ENCODE measurements at regions of chr12 and their contacts with region 1.

Region 1: DNA sequence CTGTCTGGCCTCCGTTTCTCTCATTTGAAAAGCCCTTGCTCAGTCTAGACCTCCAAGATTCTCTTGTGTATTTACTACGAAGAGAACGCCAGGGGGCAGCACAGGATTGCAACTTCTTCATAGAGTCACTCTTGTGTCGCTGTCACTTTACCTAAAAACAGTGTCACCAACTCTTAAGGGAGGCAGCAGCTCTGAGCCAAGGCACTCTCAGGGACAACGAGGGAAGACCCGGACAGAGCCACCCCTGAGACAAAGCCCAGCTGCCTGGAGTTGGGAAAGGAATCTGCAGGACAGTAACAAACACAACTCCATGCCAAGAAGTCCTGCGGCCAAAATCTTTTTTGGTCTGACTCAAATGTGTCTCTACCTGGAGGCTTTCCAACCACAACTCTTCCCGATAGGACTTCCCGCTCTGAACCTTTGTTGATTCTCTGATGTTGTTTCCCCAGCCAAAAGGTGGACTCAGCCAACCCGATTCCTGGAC is 9.6 kb upstream of the RPAP3 start:
- DNase-seq: peak; percentile 74 to 88 (median 82)
- ATAC-seq: peak; percentile 45 to 51 (median 48)
- H3K4me3 ChIP-seq: no peak overlapping the region
- H3K27ac ChIP-seq: peak overlapping the region in 11 of 12 donors; percentile 3 to 95 (median 88)
- H3K4me1 ChIP-seq: peaks cover 7 to 52% (median 44%) of the 10 kb centered on the region in 12 donors
- H3K27me3 ChIP-seq: no peaks in the 10 kb centered on the region
- CTCF ChIP-seq: peak; percentile 73 to 89 (median 80)
- POLR2A ChIP-seq: no peak

Region 2: GRCh38 chr12:47591361-47591791 is 124.1 kb before region 1 on chr12:
- intact Hi-C with region 1: no loop called
- DNase-seq: no peak
- ATAC-seq: peak in 1 of 4 donors; percentile 53
- H3K4me3 ChIP-seq: no peak overlapping the region
- H3K27ac ChIP-seq: peak overlapping the region in 3 of 12 donors; percentile 22 to 35 (median 24)
- H3K4me1 ChIP-seq: peaks cover 0 to 22% (median 7%) of the 10 kb centered on the region in 12 donors
- H3K27me3 ChIP-seq: no peaks in the 10 kb centered on the region
- CTCF ChIP-seq: no peak
- POLR2A ChIP-seq: no peak

Region 3: GRCh38 chr12:47741340-47741703 is 25.9 kb after region 1 on chr12:
- intact Hi-C with region 1: loop called in 4 of 10 experiments (anchors 1 to 2 kb)
- DNase-seq: peak; percentile 78 to 92 (median 85)
- ATAC-seq: peak in 1 of 4 donors; percentile 4
- H3K4me3 ChIP-seq: no peak overlapping the region
- H3K27ac ChIP-seq: peak overlapping the region in 11 of 12 donors; percentile 44 to 86 (median 72)
- H3K4me1 ChIP-seq: peaks cover 23 to 79% (median 50%) of the 10 kb centered on the region in 12 donors
- H3K27me3 ChIP-seq: no peaks in the 10 kb centered on the region
- CTCF ChIP-seq: no peak
- POLR2A ChIP-seq: no peak

Region 4: GRCh38 chr12:47767216-47767724 is 51.8 kb after region 1 on chr12:
- intact Hi-C with region 1: loop called in 9 of 10 experiments (anchors 1 to 5 kb)
- DNase-seq: peak in 4 of 5 donors; percentile 61 to 76 (median 66)
- ATAC-seq: peak in 3 of 4 donors; percentile 36 to 62 (median 37)
- H3K4me3 ChIP-seq: no peak overlapping the region
- H3K27ac ChIP-seq: no peak overlapping the region
- H3K4me1 ChIP-seq: peaks cover 0 to 49% (median 16%) of the 10 kb centered on the region in 12 donors
- H3K27me3 ChIP-seq: no peaks in the 10 kb centered on the region
- CTCF ChIP-seq: peak; percentile 48 to 75 (median 68)
- POLR2A ChIP-seq: no peak

Region 5: DNA sequence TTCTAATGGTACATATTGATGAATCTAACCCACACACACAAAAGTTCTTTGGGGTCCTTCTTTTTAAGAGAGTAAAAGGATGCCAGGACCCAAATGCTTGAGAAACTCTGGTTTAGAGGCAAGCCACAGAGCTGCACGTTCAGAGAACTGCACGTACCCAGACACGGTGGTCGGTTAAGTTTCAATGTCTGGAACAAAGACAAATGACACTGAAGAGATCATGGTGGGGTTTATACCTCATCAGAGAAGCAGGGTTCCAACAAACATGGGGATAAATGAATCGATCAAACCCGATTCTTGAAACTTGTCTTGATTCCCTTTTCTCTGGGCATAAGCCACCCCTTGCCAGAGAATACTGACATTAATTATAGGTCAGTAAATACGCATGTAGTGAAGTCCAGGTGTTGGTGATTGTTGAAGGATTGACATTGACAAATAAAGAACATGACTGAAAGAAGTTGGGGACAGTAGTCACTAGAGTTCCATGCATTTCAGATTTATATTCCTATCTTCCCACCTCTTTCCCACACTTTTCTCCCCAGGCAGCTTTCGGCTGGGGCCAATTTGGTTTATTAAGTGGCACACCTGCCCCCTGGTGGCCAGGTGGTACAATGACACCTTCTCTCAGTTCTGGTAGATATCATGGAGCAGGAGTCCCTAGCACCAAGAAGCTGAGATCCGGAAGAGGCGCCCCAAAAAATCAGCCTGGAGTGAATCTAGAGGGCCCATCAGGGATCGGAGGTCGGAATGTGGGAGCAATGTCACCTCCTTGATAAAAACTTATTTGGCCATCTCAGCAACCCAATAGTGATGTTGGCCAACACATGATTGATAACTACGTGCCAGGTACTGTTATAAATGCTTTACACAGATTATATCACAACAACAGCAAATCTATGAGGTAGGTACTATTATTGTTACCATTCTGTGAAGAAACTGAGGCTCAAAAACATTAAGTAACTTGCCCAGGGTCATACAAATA is 122.0 kb after region 1 on chr12:
- intact Hi-C with region 1: loop called (anchors 1 to 2 kb)
- DNase-seq: peak; percentile 69 to 81 (median 72)
- ATAC-seq: peak; percentile 52 to 78 (median 70)
- H3K4me3 ChIP-seq: no peak overlapping the region
- H3K27ac ChIP-seq: peak overlapping the region in 1 of 12 donors; percentile 36
- H3K4me1 ChIP-seq: peaks cover 0 to 33% (median 11%) of the 10 kb centered on the region in 12 donors
- H3K27me3 ChIP-seq: no peaks in the 10 kb centered on the region
- CTCF ChIP-seq: peak; percentile 89 to 99 (median 92)
- POLR2A ChIP-seq: no peak

Region 6: GRCh38 chr12:47949441-47950308 is 234.2 kb after region 1 on chr12:
- intact Hi-C with region 1: loop called in 3 of 10 experiments (anchors 10 kb)
- DNase-seq: peak; percentile 68 to 88 (median 80)
- ATAC-seq: peak; percentile 70 to 92 (median 89)
- H3K4me3 ChIP-seq: no peak overlapping the region
- H3K27ac ChIP-seq: no peak overlapping the region
- H3K4me1 ChIP-seq: peaks cover 0 to 17% (median 2%) of the 10 kb centered on the region in 12 donors
- H3K27me3 ChIP-seq: no peaks in the 10 kb centered on the region
- CTCF ChIP-seq: peak; percentile 76 to 91 (median 82)
- POLR2A ChIP-seq: no peak

Measured in heart left ventricle (tissue), 16 donors.